Activated CD4-positive, alpha-beta T cell treated with anti-CD3 and anti-CD28 coated beads for 36 hours (primary cell): ENCODE measurements at regions of chr7 and their contacts with region 1.

Region 1: GRCh38 chr7:30026229-30027064 is at the start of gene FKBP14:
- DNase-seq: peak; percentile 95
- ATAC-seq: peak; percentile 91
- H3K4me3 Mint-ChIP-seq: no peak within 1 kb of the TSS
- H3K27ac Mint-ChIP-seq: peak within 1 kb of the TSS; percentile 90
- H3K4me1 Mint-ChIP-seq: peaks cover 34% of the 10 kb centered on the region
- H3K27me3 Mint-ChIP-seq: no peaks in the 10 kb centered on the region
- total RNA-seq, gene FKBP14: 7.2 to 8.3 TPM

Region 2: DNA sequence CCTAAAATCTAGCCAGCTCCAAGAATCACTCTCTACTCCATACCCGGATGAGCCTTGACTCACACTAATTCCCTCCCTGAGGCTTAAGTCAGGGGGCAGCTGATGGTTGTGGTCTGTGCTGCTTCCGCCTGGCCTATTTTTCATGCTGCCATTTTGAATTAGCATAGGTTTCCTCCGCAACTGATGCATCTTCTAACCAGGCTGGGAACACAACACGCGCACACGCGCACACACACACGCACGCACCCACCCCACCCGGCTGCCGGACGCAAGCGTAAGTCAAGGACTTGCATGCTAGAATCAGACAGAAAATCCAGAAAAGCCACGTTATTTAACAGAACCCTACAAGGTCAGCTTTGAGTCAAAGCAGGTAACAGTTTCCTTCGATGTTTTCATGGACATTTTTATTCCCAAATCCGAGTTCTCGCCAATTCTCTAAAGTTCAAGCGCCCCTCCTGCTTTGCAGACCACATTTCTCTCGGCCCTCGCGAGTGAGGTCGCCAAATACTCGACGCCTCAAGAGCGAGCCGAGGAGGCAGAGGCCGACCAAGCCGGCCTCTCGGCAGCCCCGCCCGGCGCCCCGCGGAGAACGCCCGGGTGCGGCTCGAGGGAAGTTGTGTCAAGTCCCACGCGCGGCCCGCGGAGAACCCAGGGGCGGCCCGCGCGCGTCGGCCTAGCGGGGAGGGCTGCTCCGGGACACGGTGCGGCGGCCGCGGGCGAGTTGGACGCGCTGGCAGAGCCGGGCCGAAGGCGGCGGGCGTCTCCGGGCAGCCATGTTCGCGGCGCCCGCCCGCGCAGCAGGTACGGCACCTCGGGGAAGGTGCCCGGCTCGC is 37.8 kb before region 1 on chr7:
- CTCF ChIA-PET with region 1: interaction called, 3 read pairs
- POLR2A ChIA-PET with region 1: no interaction called
- intact Hi-C with region 1: loop called in 1 of 2 experiments (anchors 2 kb)
- DNase-seq: peak; percentile 56
- ATAC-seq: peak; percentile 50
- H3K4me3 Mint-ChIP-seq: peak overlapping the region; percentile 65
- H3K27ac Mint-ChIP-seq: peak overlapping the region; percentile 26
- H3K4me1 Mint-ChIP-seq: peaks cover 10% of the 10 kb centered on the region
- H3K27me3 Mint-ChIP-seq: peaks cover 40% of the 10 kb centered on the region

Region 3: DNA sequence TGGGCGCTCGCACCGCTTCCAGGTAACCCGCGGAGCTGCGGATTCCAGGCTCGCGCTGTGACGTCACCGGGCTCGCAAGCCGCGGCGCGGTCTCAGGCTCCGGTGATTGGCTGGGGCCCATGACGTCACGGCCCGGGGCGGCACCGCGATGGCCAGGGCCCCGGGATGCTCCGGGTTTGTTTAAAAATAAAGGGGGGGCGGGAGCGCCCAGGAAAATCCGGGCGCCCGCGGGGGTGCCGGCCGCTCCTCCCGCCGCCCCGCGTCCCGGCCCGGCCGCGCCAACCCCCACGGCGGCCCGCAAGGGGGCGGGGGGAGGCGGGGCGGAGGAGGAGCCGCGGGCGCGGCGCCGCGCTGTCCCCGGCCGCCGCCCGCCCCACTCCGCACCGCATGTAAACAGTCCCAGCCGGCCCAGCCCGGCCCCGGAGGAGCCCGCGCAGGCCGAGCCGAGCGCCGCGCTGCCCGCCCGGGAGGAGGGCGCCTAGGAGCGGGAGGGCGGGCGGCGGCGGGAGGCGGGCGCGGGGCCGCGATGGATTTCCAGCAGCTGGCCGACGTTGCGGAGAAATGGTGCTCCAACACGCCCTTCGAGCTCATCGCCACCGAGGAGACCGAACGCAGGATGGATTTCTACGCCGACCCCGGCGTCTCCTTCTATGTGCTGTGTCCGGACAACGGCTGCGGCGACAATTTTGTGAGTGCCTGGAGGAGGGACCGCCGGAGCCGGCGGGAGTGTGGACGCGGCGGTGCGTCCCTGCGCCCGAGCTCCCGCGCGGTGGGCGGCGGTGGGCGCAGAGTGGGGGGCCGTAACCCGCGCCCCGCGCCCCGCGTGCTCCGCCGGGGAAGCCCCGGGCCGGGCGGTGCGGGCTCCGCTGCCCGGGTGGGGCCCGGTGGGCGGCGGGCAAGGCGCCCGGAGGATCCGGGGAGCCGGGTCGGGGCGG is 108.4 kb after region 1 on chr7 and contains the start of gene MTURN:
- CTCF ChIA-PET with region 1: no interaction called
- POLR2A ChIA-PET with region 1: no interaction called
- intact Hi-C with region 1: loop called (anchors 1 to 5 kb)
- DNase-seq: peak; percentile 92
- ATAC-seq: peak; percentile 83
- H3K4me3 Mint-ChIP-seq: peak within 1 kb of the TSS; percentile 81
- H3K27ac Mint-ChIP-seq: peak within 1 kb of the TSS; percentile 84
- H3K4me1 Mint-ChIP-seq: peaks cover 4% of the 10 kb centered on the region
- H3K27me3 Mint-ChIP-seq: no peaks in the 10 kb centered on the region
- total RNA-seq, gene MTURN: 4.2 TPM

Region 4: GRCh38 chr7:30445770-30446169 is 419.3 kb after region 1 on chr7:
- CTCF ChIA-PET with region 1: no interaction called
- POLR2A ChIA-PET with region 1: no interaction called
- intact Hi-C with region 1: no loop called
- DNase-seq: peak; percentile 87
- ATAC-seq: peak; percentile 99
- H3K4me3 Mint-ChIP-seq: no peak overlapping the region
- H3K27ac Mint-ChIP-seq: no peak overlapping the region
- H3K4me1 Mint-ChIP-seq: peaks cover 4% of the 10 kb centered on the region
- H3K27me3 Mint-ChIP-seq: no peaks in the 10 kb centered on the region

Region 5: GRCh38 chr7:30478349-30479201 is 452.1 kb after region 1 on chr7 and contains the start of gene NOD1:
- CTCF ChIA-PET with region 1: no interaction called
- POLR2A ChIA-PET with region 1: no interaction called
- intact Hi-C with region 1: loop called (anchors 2 to 5 kb)
- DNase-seq: peak; percentile 86
- ATAC-seq: peak; percentile 89
- H3K4me3 Mint-ChIP-seq: peak within 1 kb of the TSS; percentile 88
- H3K27ac Mint-ChIP-seq: peak within 1 kb of the TSS; percentile 90
- H3K4me1 Mint-ChIP-seq: peaks cover 50% of the 10 kb centered on the region
- H3K27me3 Mint-ChIP-seq: no peaks in the 10 kb centered on the region
- total RNA-seq, gene NOD1: 10.8 to 11.0 TPM

Region 6: GRCh38 chr7:30594549-30595435 is 568.3 kb after region 1 on chr7 and contains the start of gene GARS1:
- CTCF ChIA-PET with region 1: no interaction called
- POLR2A ChIA-PET with region 1: no interaction called
- intact Hi-C with region 1: loop called (anchors 1 to 2 kb)
- DNase-seq: peak; percentile 94
- ATAC-seq: peak; percentile 84
- H3K4me3 Mint-ChIP-seq: peak within 1 kb of the TSS; percentile 100
- H3K27ac Mint-ChIP-seq: peak within 1 kb of the TSS; percentile 100
- H3K4me1 Mint-ChIP-seq: peaks cover 51% of the 10 kb centered on the region
- H3K27me3 Mint-ChIP-seq: no peaks in the 10 kb centered on the region
- total RNA-seq, gene GARS1: 391 to 439 TPM